ENCODE measurements at regions of chr11 and their contacts with region 1.

Region 1: GRCh38 chr11:114439229-114440120 is at the start of gene REXO2:
- DNase-seq: peak; percentile 96
- H3K4me3 Mint-ChIP-seq: peak within 1 kb of the TSS; percentile 99
- H3K27ac Mint-ChIP-seq: peak within 1 kb of the TSS; percentile 93
- H3K4me1 Mint-ChIP-seq: peaks cover 13% of the 10 kb centered on the region
- H3K27me3 Mint-ChIP-seq: no peaks in the 10 kb centered on the region
- CTCF ChIP-seq: peak; percentile 12
- total RNA-seq, gene REXO2: 125 and 126 TPM in 2 replicates

Region 2: DNA sequence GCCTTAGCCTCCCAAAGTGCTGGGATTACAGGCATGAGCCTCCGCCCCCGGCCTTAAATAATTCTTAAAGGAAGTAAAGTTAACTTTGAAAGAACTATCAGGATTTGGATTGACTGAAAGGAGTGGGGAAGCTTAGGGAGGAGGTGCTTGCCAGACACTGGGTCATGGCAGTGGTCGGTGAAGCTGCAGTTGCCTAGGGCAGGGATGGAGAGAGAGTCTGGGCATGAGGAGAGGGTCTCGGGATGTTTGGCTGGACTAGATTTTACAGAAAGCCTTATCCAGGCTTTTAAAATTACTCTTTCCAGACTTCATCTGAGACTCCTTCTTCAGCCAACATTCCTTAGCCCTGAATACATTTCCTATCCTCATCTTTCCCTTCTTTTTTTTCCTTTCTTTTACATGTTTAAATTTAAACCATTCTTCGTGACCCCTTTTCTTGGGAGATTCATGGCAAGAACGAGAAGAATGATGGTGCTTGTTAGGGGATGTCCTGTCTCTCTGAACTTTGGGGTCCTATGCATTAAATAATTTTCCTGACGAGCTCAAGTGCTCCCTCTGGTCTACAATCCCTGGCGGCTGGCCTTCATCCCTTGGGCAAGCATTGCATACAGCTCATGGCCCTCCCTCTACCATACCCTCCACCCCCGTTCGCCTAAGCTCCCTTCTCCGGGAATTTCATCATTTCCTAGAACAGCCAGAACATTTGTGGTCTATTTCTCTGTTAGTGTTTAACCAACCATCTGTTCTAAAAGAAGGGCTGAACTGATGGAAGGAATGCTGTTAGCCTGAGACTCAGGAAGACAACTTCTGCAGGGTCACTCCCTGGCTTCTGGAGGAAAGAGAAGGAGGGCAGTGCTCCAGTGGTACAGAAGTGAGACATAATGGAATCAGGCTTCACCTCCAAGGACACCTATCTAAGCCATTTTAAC is 143.5 kb before region 1 on chr11 and contains the start of gene NNMT:
- CTCF ChIA-PET with region 1: no interaction called
- POLR2A ChIA-PET with region 1: interaction called, 12 read pairs
- intact Hi-C with region 1: no loop called
- DNase-seq: peak; percentile 99
- H3K4me3 Mint-ChIP-seq: peak within 1 kb of the TSS; percentile 78
- H3K27ac Mint-ChIP-seq: peak within 1 kb of the TSS; percentile 98
- H3K4me1 Mint-ChIP-seq: peaks cover 37% of the 10 kb centered on the region
- H3K27me3 Mint-ChIP-seq: no peaks in the 10 kb centered on the region
- CTCF ChIP-seq: no peak
- total RNA-seq, gene NNMT: 429 and 638 TPM in 2 replicates

Region 3: GRCh38 chr11:114348200-114349191 is 91.0 kb before region 1 on chr11:
- CTCF ChIA-PET with region 1: interaction called, 4 read pairs
- POLR2A ChIA-PET with region 1: interaction called, 7 read pairs
- intact Hi-C with region 1: loop called (anchors 2 kb)
- DNase-seq: peak; percentile 70
- H3K4me3 Mint-ChIP-seq: no peak overlapping the region
- H3K27ac Mint-ChIP-seq: no peak overlapping the region
- H3K4me1 Mint-ChIP-seq: peaks cover 5% of the 10 kb centered on the region
- H3K27me3 Mint-ChIP-seq: no peaks in the 10 kb centered on the region
- CTCF ChIP-seq: peak; percentile 47

Region 4: DNA sequence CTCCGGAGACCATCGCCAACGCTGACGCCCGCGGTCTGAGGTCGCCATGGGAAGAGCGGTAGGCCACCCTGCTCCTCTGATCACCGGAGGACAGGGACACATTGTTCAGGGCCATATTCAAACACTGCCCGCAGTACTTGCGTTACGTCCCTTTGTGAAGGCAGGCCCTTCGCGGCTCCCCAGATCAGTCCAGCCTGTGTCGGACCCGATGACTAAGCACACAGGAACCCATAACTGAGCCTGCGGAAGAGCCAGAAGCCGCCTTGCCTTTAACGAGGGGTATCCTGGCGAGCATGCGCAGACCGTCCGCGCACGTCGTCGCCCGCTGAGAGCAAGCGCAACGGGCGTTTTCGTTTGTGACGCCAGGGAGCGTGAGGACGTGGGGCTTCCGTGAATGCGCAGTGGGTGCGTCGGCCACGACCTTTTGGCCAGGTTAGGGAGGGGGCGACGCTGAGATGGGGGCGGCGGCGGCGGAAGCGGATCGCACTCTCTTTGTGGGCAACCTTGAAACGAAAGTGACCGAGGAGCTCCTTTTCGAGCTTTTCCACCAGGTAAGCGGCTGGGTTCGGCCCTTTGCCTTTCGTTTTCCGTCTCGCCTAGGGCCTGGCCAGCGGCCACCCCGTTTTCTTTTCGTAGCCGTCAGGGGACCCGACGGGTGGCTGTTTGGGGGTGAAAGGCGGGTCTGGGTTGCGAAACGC is 39.1 kb before region 1 on chr11 and contains the starts of genes C11orf71 and RBM7:
- CTCF ChIA-PET with region 1: no interaction called
- POLR2A ChIA-PET with region 1: interaction called, 50 read pairs
- intact Hi-C with region 1: loop called (anchors 1 kb)
- DNase-seq: peak; percentile 99
- H3K4me3 Mint-ChIP-seq: peak within 1 kb of the TSS; percentile 92
- H3K27ac Mint-ChIP-seq: peak within 1 kb of the TSS; percentile 100
- H3K4me1 Mint-ChIP-seq: peaks cover 39% of the 10 kb centered on the region
- H3K27me3 Mint-ChIP-seq: no peaks in the 10 kb centered on the region
- CTCF ChIP-seq: no peak
- total RNA-seq, gene C11orf71: 3.9 and 5.6 TPM in 2 replicates
- total RNA-seq, gene RBM7: 42.7 and 46.4 TPM in 2 replicates

Region 5: DNA sequence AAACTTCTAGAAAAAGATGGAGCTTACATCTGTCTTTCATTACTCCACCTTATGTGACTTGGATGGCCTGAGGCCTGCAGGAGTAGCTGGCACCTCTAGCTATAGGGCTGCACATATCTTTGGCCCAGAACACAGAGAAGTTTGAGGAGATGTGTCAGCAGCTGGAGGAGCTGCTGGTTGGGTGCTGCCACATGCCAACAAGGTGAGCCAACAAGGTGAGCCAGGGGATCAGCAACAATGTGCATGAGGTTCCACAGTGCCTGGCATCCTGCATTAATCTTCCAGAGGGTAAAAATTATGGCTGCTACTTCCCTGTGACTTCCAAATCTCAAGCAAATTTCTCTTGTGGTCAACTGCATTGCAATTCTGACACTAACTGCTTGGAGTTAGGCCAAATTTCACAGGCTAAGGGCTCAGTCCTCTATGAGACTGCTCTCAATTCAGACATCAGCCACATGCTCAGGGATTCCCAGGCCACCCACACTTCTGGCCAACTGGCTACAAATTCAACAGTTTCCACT is 23.0 kb before region 1 on chr11:
- CTCF ChIA-PET with region 1: interaction called, 5 read pairs
- POLR2A ChIA-PET with region 1: interaction called, 30 read pairs
- intact Hi-C with region 1: no loop called
- DNase-seq: peak; percentile 46
- H3K4me3 Mint-ChIP-seq: no peak overlapping the region
- H3K27ac Mint-ChIP-seq: peak overlapping the region; percentile 74
- H3K4me1 Mint-ChIP-seq: peaks cover 14% of the 10 kb centered on the region
- H3K27me3 Mint-ChIP-seq: no peaks in the 10 kb centered on the region
- CTCF ChIP-seq: no peak

Region 6: DNA sequence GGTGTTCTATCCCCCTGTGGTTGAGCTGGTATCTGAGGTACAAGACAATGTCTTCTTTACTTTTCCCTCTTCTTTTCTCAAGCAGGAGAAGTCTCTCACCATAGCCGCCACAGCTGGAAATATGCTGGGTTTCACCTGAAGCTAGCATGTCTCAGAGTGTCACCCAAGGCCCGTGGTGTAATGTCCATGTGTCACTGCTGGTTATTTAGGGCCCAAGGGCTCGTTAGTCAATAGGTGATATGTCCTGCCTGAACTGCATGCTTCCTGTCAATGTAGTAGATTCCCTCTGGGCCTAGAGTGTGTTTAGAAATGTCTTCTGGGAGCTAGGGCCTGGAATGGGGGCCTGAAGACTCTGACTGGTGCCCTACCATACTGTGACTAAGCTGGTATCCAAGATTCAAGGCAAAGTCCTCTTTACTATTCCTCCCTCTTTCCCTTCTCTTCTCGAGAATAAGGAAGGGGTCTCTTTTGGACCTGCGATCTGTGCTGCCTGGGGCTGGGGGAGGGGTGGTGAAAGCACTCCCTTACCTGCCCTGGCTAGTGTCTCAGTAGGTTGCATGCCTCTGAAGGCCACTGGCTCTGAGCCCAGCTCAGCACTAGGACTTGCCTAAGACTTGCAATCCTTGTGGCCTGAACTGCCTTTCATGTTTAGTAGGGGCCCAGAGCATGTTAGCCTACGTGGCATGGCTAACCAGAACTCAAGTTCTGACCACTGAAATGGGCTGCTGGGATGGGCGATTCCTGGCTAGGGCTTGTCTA is 13.4 kb before region 1 on chr11:
- CTCF ChIA-PET with region 1: interaction called, 5 read pairs
- POLR2A ChIA-PET with region 1: interaction called, 10 read pairs
- intact Hi-C with region 1: no loop called
- DNase-seq: peak; percentile 34
- H3K4me3 Mint-ChIP-seq: no peak overlapping the region
- H3K27ac Mint-ChIP-seq: no peak overlapping the region
- H3K4me1 Mint-ChIP-seq: no peaks in the 10 kb centered on the region
- H3K27me3 Mint-ChIP-seq: no peaks in the 10 kb centered on the region
- CTCF ChIP-seq: no peak